PC-3 (cell line): ENCODE measurements at regions of chr15 and their contacts with region 1.

Region 1: DNA sequence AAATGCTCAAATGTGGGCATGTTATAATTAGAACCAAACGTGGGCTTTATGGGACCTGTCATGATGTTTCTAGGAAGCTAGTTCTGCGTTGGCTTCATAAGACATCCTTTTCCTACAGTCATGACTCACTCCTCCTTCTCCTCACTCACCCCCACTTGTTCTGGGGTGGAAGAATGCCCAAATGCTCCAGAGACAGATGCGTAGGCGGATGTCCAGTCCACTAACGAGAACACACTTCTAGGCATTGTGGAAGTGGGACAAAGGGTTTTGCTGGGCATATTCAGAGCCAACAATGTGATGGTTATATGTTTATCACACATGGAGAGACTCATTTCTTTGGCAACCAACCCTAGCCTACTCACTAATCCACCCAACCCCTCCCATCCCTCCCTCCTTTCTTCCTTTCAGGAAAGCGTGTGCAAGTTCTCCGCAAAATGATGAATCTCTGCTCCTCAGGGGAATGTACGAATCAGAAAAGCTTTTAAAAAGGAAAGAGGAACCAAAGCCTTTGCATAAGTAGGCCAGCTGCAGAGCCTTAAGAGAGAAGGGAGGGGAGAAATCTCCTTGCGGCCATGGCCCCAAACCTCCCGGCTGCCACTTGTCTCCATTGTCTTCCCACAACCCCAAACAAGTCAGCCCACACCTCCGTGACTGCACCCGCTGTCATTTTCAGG is 123.0 kb upstream of the SPRED1 start:
- DNase-seq: peak; percentile 99
- ATAC-seq: peak; percentile 86
- H3K4me3 ChIP-seq: peak overlapping the region; percentile 63
- H3K27ac ChIP-seq: peak overlapping the region; percentile 96
- H3K4me1 ChIP-seq: peaks cover 47% of the 10 kb centered on the region
- H3K27me3 ChIP-seq: no peaks in the 10 kb centered on the region
- CTCF ChIP-seq: no peak

Region 2: DNA sequence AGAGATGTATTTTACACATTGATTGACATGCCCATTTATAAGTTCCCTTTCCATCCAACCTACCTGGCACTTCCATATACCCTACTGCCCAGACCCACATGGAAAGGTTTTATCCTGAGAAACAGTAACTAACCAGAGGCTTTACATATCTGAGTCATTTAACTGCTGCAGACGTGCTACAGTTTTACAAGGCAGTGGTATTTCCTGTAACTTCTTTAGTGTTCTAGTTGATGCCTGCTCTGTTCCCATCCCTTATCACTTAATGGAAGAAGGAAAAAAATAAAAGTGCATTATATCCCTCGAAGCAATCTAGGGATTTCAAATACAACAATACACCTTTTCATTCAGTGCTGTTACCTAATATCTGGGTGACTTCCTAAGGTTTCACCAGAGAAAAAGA is 88.1 kb before region 1 on chr15:
- CTCF ChIA-PET with region 1: no interaction called
- POLR2A ChIA-PET with region 1: no interaction called
- intact Hi-C with region 1: loop called (anchors 2 kb)
- DNase-seq: peak; percentile 78
- ATAC-seq: peak; percentile 70
- H3K4me3 ChIP-seq: no peak overlapping the region
- H3K27ac ChIP-seq: peak overlapping the region; percentile 72
- H3K4me1 ChIP-seq: peaks cover 58% of the 10 kb centered on the region
- H3K27me3 ChIP-seq: no peaks in the 10 kb centered on the region
- CTCF ChIP-seq: no peak

Region 3: GRCh38 chr15:38153781-38154180 is 24.1 kb after region 1 on chr15:
- CTCF ChIA-PET with region 1: no interaction called
- POLR2A ChIA-PET with region 1: no interaction called
- intact Hi-C with region 1: loop called (anchors 2 kb)
- DNase-seq: no peak
- ATAC-seq: no peak
- H3K4me3 ChIP-seq: no peak overlapping the region
- H3K27ac ChIP-seq: no peak overlapping the region
- H3K4me1 ChIP-seq: no peaks in the 10 kb centered on the region; the same call in 1 of the 2 replicates
- H3K27me3 ChIP-seq: no peaks in the 10 kb centered on the region
- CTCF ChIP-seq: no peak

Region 4: GRCh38 chr15:38195191-38195901 is 65.7 kb after region 1 on chr15:
- CTCF ChIA-PET with region 1: no interaction called
- POLR2A ChIA-PET with region 1: interaction called, 10 read pairs
- intact Hi-C with region 1: loop called (anchors 1 kb)
- DNase-seq: peak; percentile 78
- ATAC-seq: peak; percentile 82
- H3K4me3 ChIP-seq: no peak overlapping the region
- H3K27ac ChIP-seq: peak overlapping the region; percentile 84
- H3K4me1 ChIP-seq: peaks cover 42% of the 10 kb centered on the region
- H3K27me3 ChIP-seq: no peaks in the 10 kb centered on the region
- CTCF ChIP-seq: no peak

Region 5: GRCh38 chr15:38354315-38354929 is 224.8 kb after region 1 on chr15:
- CTCF ChIA-PET with region 1: no interaction called
- POLR2A ChIA-PET with region 1: no interaction called
- intact Hi-C with region 1: loop called (anchors 5 kb)
- DNase-seq: peak; percentile 87
- ATAC-seq: peak; percentile 85
- H3K4me3 ChIP-seq: no peak overlapping the region
- H3K27ac ChIP-seq: no peak overlapping the region
- H3K4me1 ChIP-seq: no peaks in the 10 kb centered on the region
- H3K27me3 ChIP-seq: no peaks in the 10 kb centered on the region
- CTCF ChIP-seq: peak; percentile 91